ENCODE measurements at regions of chr20 and their contacts with region 1.

Region 1: GRCh38 chr20:10427060-10427692 is 6.8 kb downstream of the MKKS start:
- DNase-seq: peak; percentile 63
- H3K4me3 Mint-ChIP-seq: no peak overlapping the region
- H3K27ac Mint-ChIP-seq: no peak overlapping the region
- H3K4me1 Mint-ChIP-seq: peaks cover 44% of the 10 kb centered on the region
- H3K27me3 Mint-ChIP-seq: no peaks in the 10 kb centered on the region

Region 2: DNA sequence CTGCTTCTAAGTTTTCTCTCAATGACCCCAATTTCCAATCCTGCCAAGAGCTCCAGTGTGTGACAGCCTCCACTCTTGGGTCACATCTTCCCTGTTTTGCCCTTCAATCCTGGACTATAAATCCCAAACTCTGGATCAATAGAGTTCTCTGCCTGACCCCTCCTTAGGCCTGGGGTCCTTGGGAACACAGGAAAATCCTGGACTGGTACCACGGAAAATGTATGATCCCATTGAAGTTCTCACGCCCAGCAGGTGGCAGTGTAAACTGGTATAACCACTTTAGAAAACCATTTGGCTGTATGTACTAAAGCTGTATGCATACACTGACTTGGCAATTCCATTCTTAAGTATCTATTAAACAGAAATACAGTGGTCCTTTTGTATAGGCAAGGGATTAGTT is 110.6 kb before region 1 on chr20:
- CTCF ChIA-PET with region 1: interaction called, 36 read pairs
- intact Hi-C with region 1: loop called (anchors 1 kb)
- DNase-seq: peak; percentile 41
- H3K4me3 Mint-ChIP-seq: no peak overlapping the region
- H3K27ac Mint-ChIP-seq: no peak overlapping the region
- H3K4me1 Mint-ChIP-seq: no peaks in the 10 kb centered on the region
- H3K27me3 Mint-ChIP-seq: peaks cover 25% of the 10 kb centered on the region

Region 3: GRCh38 chr20:10408108-10408813 is 18.9 kb before region 1 on chr20:
- CTCF ChIA-PET with region 1: interaction called, 11 read pairs
- intact Hi-C with region 1: no loop called
- DNase-seq: no peak
- H3K4me3 Mint-ChIP-seq: no peak overlapping the region
- H3K27ac Mint-ChIP-seq: no peak overlapping the region
- H3K4me1 Mint-ChIP-seq: peaks cover 3% of the 10 kb centered on the region
- H3K27me3 Mint-ChIP-seq: no peaks in the 10 kb centered on the region

Region 4: GRCh38 chr20:10739566-10739965 is 312.4 kb after region 1 on chr20:
- CTCF ChIA-PET with region 1: no interaction called
- intact Hi-C with region 1: no loop called
- DNase-seq: no peak
- H3K4me3 Mint-ChIP-seq: no peak overlapping the region
- H3K27ac Mint-ChIP-seq: no peak overlapping the region
- H3K4me1 Mint-ChIP-seq: no peaks in the 10 kb centered on the region
- H3K27me3 Mint-ChIP-seq: peaks cover 2% of the 10 kb centered on the region

Region 5: DNA sequence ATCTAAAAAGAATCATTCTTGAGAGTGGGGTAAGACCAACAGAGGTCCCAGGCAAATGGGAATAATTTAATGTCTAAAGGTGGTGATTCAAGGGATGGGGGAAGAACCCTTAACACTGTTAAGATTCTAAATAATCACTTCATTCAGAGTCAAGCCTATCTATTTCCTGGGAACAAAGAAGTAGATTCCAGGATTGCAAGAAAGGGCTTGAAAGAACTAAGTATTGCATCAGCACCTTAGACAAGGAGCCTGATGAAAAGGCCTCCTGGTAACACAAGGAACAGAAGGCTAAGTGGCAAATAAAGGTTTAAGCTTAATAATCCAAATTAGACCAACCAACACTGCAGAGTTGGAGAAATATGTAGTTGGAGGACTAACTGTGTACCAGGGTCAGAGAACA is 869.8 kb after region 1 on chr20:
- CTCF ChIA-PET with region 1: no interaction called
- intact Hi-C with region 1: no loop called
- DNase-seq: no peak
- H3K4me3 Mint-ChIP-seq: no peak overlapping the region
- H3K27ac Mint-ChIP-seq: no peak overlapping the region
- H3K4me1 Mint-ChIP-seq: no peaks in the 10 kb centered on the region
- H3K27me3 Mint-ChIP-seq: no peaks in the 10 kb centered on the region

Measured in activated naive CD4-positive, alpha-beta T cell treated with anti-CD3 and anti-CD28 coated beads for 36 hours (primary cell).